MCF 10A (cell line): ENCODE measurements at regions of chr7 and their contacts with region 1.

Region 1: DNA sequence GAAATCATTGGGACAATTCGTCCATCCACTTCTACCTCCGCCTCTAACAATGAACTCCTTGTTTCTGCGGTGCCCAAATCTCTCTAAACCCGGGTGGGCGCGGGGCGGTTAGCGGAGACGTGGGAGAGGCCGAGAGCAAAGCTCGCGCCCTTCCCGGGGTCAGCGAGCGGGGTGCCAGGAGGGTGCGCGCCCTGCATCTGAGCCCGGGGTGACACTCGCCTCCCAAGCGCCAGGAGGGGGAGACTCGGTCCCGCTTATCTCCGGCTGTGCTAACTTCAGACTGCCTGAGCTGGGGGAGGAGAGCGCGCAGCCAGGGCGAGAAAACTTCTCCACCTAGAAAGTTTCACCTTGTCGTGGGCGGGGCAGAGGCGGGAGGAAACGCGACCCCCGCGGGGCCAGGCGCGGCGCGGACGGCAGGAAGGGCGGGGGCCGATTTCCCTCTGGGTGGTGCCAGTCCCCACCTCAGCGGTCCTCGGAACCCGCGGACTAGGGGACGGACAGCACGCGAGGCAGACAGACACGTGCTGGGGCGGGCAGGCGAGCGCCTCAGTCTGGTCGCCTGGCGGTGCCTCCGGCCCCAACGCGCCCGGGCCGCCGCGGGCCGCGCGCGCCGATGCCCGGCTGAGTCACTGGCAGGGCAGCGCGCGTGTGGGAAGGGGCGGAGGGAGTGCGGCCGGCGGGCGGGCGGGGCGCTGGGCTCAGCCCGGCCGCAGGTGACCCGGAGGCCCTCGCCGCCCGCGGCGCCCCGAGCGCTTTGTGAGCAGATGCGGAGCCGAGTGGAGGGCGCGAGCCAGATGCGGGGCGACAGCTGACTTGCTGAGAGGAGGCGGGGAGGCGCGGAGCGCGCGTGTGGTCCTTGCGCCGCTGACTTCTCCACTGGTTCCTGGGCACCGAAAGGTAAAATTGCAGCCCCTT is at the start of gene MET:
- DNase-seq: peak; percentile 93
- H3K4me3 Mint-ChIP-seq: peak within 1 kb of the TSS; percentile 83
- H3K27ac Mint-ChIP-seq: peak within 1 kb of the TSS; percentile 98
- H3K4me1 Mint-ChIP-seq: peaks cover 19% of the 10 kb centered on the region
- H3K27me3 Mint-ChIP-seq: no peaks in the 10 kb centered on the region
- CTCF ChIP-seq: peak; percentile 64
- total RNA-seq, gene MET: 129 and 154 TPM in 2 replicates

Region 2: DNA sequence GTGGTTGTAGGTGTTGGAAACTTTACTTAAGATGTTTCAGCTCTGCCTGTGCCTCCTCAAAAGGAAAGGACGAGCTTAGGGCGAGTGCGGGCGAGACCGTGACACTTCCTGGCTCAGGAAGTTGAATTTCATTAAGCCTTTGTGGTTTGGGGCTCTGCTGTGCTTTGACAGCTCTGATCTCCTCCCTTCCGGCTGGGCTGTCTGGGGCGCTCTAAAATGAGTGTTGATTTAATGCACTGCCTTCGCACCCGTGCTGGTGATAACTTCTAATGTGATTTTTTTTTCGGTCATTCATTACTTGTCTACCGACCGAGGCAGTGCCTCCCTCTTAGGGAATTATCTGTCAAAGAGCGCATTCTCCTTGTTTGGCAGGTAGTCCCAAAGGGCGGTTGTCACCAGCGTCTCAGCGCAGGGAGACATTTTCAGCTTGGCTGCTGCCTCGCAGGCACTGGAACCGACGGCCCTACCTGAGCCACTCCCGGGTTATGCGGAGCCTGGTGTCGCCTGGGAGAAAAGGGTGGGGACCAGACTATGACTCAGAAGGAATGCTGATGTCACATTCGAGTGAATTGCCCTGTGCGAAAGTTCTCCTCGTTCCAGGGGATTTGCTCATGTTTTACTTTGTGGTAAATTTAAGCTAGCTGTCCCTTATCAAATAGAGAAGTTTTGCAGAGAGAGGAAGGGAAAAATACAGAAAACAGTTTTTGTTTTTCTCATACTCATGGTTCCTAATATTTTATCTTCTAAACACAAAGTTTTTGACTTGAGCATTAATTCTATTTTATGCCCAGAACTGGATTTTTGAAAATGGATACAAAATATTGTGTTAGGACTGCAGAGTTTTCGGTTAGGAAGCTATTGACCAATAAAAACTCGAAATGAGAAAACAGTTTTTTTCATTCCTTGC is 460.7 kb before region 1 on chr7:
- CTCF ChIA-PET with region 1: no interaction called
- POLR2A ChIA-PET with region 1: interaction called, 12 read pairs
- intact Hi-C with region 1: no loop called
- DNase-seq: peak; percentile 90
- H3K4me3 Mint-ChIP-seq: peak overlapping the region; percentile 95
- H3K27ac Mint-ChIP-seq: peak overlapping the region; percentile 98
- H3K4me1 Mint-ChIP-seq: peaks cover 19% of the 10 kb centered on the region
- H3K27me3 Mint-ChIP-seq: no peaks in the 10 kb centered on the region
- CTCF ChIP-seq: no peak

Region 3: DNA sequence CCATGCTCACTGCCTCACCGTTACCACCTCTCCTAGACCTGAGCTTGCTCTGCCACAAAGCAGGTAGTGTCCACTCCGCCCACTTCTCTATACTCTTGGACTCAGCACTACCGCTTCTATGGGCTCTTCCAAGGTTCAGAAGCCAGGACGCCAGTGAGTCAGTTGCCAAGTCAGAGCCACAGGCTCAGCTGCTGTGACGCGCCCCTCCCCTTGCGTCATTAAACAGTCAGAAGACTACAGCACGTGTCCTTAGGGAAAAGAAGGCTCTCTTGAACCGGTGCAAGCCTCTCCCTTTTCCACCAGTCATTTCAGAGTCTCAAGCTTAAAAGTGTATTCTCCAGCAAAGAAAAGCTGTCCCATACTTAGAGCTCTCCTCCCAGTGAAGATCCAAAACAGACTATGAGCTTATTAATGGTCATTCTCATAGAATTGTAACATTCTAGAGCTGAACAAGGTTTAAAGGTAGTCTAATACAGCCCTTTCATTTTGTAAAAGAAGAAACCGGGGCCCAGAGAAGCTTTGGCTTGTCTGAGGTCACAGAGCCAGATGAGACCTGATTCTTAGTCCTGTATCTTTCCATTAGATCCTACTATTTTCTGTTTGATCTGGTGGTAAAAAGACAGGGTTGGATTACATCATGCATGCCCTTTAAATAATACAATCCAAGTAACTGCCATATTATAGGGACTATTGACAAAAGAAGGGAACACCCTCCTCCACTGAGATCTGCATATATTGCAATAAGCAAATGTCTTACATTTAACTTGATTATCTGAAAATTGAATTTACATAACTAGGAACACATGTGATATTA is 40.8 kb before region 1 on chr7:
- CTCF ChIA-PET with region 1: interaction called, 57 read pairs
- POLR2A ChIA-PET with region 1: interaction called, 362 read pairs
- intact Hi-C with region 1: loop called (anchors 2 kb)
- DNase-seq: peak; percentile 97
- H3K4me3 Mint-ChIP-seq: peak overlapping the region; percentile 62
- H3K27ac Mint-ChIP-seq: peak overlapping the region; percentile 94
- H3K4me1 Mint-ChIP-seq: peaks cover 48% of the 10 kb centered on the region
- H3K27me3 Mint-ChIP-seq: no peaks in the 10 kb centered on the region
- CTCF ChIP-seq: no peak

Region 4: DNA sequence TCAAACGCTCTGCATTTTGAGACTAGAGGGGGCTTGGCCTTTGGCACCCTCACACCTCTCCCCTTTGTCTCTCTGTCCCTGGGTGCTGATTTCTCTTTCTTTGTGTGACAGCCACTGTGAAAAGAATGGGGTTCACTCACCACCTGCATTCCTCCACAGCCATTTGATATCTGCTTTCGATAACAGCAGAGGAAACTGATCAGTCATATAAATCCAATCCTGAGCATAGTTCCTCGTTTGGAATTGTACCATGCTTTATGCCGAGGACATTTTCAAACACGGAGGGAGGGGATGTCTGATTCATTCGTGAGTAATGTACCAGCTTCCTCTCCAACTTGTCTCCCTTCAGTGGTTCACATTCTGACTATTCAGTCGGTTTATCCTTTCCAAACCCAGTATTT is 15.9 kb after region 1 on chr7:
- CTCF ChIA-PET with region 1: interaction called, 13 read pairs
- POLR2A ChIA-PET with region 1: interaction called, 152 read pairs
- intact Hi-C with region 1: no loop called
- DNase-seq: peak; percentile 76
- H3K4me3 Mint-ChIP-seq: peak overlapping the region; percentile 52
- H3K27ac Mint-ChIP-seq: peak overlapping the region; percentile 44
- H3K4me1 Mint-ChIP-seq: peaks cover 66% of the 10 kb centered on the region
- H3K27me3 Mint-ChIP-seq: no peaks in the 10 kb centered on the region
- CTCF ChIP-seq: no peak

Region 5: GRCh38 chr7:116715077-116715476 is 43.1 kb after region 1 on chr7:
- CTCF ChIA-PET with region 1: interaction called, 10 read pairs
- POLR2A ChIA-PET with region 1: interaction called, 54 read pairs
- intact Hi-C with region 1: loop called (anchors 2 kb)
- DNase-seq: no peak
- H3K4me3 Mint-ChIP-seq: no peak overlapping the region
- H3K27ac Mint-ChIP-seq: peak overlapping the region; percentile 84
- H3K4me1 Mint-ChIP-seq: peaks cover 43% of the 10 kb centered on the region
- H3K27me3 Mint-ChIP-seq: no peaks in the 10 kb centered on the region
- CTCF ChIP-seq: no peak

Region 6: DNA sequence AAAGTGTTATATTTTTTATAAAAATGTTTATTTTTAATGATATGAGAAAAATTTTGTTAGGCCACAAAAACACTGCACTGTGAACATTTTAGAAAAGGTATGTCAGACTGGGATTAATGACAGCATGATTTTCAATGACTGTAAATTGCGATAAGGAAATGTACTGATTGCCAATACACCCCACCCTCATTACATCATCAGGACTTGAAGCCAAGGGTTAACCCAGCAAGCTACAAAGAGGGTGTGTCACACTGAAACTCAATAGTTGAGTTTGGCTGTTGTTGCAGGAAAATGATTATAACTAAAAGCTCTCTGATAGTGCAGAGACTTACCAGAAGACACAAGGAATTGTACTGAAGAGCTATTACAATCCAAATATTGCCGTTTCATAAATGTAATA is 125.7 kb after region 1 on chr7:
- CTCF ChIA-PET with region 1: interaction called, 6 read pairs
- POLR2A ChIA-PET with region 1: interaction called, 14 read pairs
- intact Hi-C with region 1: loop called (anchors 1 kb)
- DNase-seq: no peak
- H3K4me3 Mint-ChIP-seq: no peak overlapping the region
- H3K27ac Mint-ChIP-seq: no peak overlapping the region
- H3K4me1 Mint-ChIP-seq: peaks cover 19% of the 10 kb centered on the region
- H3K27me3 Mint-ChIP-seq: no peaks in the 10 kb centered on the region
- CTCF ChIP-seq: no peak